ENCODE measurements at regions of chr14 and their contacts with region 1.

Region 1: GRCh38 chr14:89750281-89750755 is 204.2 kb downstream of the EFCAB11 start:
- DNase-seq: no peak
- H3K4me3 Mint-ChIP-seq: no peak overlapping the region
- H3K27ac Mint-ChIP-seq: peak overlapping the region; percentile 86
- H3K4me1 Mint-ChIP-seq: peaks cover 56% of the 10 kb centered on the region
- H3K27me3 Mint-ChIP-seq: no peaks in the 10 kb centered on the region

Region 2: GRCh38 chr14:89422181-89422951 is 328.0 kb before region 1 on chr14:
- intact Hi-C with region 1: loop called (anchors 2 kb)
- DNase-seq: no peak
- H3K4me3 Mint-ChIP-seq: peak overlapping the region; percentile 24
- H3K27ac Mint-ChIP-seq: peak overlapping the region; percentile 83
- H3K4me1 Mint-ChIP-seq: peaks cover 75% of the 10 kb centered on the region
- H3K27me3 Mint-ChIP-seq: no peaks in the 10 kb centered on the region

Region 3: DNA sequence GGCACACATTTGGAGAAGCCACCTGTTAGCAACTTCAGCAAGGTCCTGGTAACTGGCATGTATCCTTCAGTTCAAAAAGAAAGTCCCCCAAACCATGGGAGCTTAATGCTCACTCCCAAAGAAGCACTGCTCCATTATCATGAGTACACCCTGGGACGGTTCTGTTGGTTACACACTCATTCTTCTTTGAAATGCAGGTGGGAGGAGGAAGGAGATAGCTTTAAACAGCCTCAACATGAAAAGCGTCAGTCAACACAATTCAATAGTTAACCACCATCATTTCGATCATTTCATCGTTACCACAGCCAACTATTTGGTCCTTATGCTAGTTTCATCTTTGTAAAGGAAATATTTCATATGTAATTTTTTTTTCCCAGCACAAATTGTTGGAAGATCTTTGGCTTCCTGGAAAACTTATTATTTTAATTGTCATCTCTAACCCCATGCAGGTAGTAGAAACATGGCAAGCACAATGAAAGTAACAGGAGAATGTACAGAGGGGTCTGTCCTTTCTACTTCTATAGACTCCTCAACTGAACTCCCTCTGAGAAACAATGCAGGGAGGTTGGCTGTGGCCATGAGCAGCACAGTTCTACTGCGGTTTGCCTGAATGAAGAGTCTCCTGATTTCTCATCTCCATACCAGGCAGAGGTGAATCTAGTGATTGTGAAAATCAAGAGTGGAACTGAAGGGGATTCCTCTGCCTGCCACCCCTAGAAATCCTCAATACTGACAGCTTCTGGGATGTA is 136.9 kb before region 1 on chr14:
- intact Hi-C with region 1: loop called (anchors 1 kb)
- DNase-seq: no peak
- H3K4me3 Mint-ChIP-seq: peak overlapping the region; percentile 59
- H3K27ac Mint-ChIP-seq: peak overlapping the region; percentile 86
- H3K4me1 Mint-ChIP-seq: peaks cover 69% of the 10 kb centered on the region
- H3K27me3 Mint-ChIP-seq: no peaks in the 10 kb centered on the region

Region 4: GRCh38 chr14:89672636-89673511 is 77.4 kb before region 1 on chr14:
- intact Hi-C with region 1: loop called (anchors 2 kb)
- DNase-seq: no peak
- H3K4me3 Mint-ChIP-seq: no peak overlapping the region
- H3K27ac Mint-ChIP-seq: no peak overlapping the region
- H3K4me1 Mint-ChIP-seq: peaks cover 42% of the 10 kb centered on the region
- H3K27me3 Mint-ChIP-seq: no peaks in the 10 kb centered on the region

Region 5: GRCh38 chr14:89701211-89702043 is 48.9 kb before region 1 on chr14:
- intact Hi-C with region 1: loop called (anchors 2 kb)
- DNase-seq: peak; percentile 81
- H3K4me3 Mint-ChIP-seq: peak overlapping the region; percentile 57
- H3K27ac Mint-ChIP-seq: peak overlapping the region; percentile 79
- H3K4me1 Mint-ChIP-seq: peaks cover 43% of the 10 kb centered on the region
- H3K27me3 Mint-ChIP-seq: no peaks in the 10 kb centered on the region

Region 6: GRCh38 chr14:89730687-89731086 is 19.6 kb before region 1 on chr14:
- intact Hi-C with region 1: no loop called
- DNase-seq: no peak
- H3K4me3 Mint-ChIP-seq: no peak overlapping the region
- H3K27ac Mint-ChIP-seq: no peak overlapping the region
- H3K4me1 Mint-ChIP-seq: peaks cover 14% of the 10 kb centered on the region
- H3K27me3 Mint-ChIP-seq: no peaks in the 10 kb centered on the region

Region 7: GRCh38 chr14:89767861-89768268 is 17.5 kb after region 1 on chr14:
- intact Hi-C with region 1: loop called (anchors 2 kb)
- DNase-seq: peak; percentile 60
- H3K4me3 Mint-ChIP-seq: no peak overlapping the region
- H3K27ac Mint-ChIP-seq: peak overlapping the region; percentile 82
- H3K4me1 Mint-ChIP-seq: peaks cover 24% of the 10 kb centered on the region
- H3K27me3 Mint-ChIP-seq: peaks cover 6% of the 10 kb centered on the region

Region 8: DNA sequence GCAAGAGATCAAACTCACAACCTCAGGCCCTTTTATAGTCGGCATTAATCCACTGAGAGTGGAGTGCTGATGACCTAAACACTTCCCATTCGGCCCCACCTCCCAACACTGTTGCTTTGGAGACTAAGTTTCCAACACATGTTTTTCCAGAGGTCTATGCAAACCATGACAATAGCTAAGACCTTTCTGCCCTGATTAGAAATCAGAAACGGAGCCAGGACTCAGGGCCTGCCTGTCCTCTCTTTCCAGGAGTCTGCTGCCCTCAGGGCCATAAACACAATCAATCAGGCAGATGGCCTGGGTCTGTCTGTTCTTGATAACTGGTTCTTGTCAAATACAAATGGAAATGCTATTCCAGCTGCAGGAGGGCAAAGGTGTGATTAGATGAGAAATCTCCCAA is 408.8 kb after region 1 on chr14:
- intact Hi-C with region 1: no loop called
- DNase-seq: no peak
- H3K4me3 Mint-ChIP-seq: no peak overlapping the region
- H3K27ac Mint-ChIP-seq: no peak overlapping the region
- H3K4me1 Mint-ChIP-seq: no peaks in the 10 kb centered on the region
- H3K27me3 Mint-ChIP-seq: peaks cover 16% of the 10 kb centered on the region